ENCODE measurements at regions of chr10 and their contacts with region 1.

Region 1: GRCh38 chr10:35642027-35642792 is at the start of gene FZD8:
- DNase-seq: peak; percentile 93 to 95
- ATAC-seq: peak; percentile 93 to 94 (median 93)
- H3K4me3 ChIP-seq: peak within 1 kb of the TSS; percentile 95
- H3K27ac ChIP-seq: peak within 1 kb of the TSS; percentile 92
- H3K4me1 ChIP-seq: peaks cover 5% of the 10 kb centered on the region
- H3K27me3 ChIP-seq: no peaks in the 10 kb centered on the region
- CTCF ChIP-seq: peak; percentile 12
- total RNA-seq, gene FZD8: 4.1 to 6.1 (median 5.6) TPM

Region 2: DNA sequence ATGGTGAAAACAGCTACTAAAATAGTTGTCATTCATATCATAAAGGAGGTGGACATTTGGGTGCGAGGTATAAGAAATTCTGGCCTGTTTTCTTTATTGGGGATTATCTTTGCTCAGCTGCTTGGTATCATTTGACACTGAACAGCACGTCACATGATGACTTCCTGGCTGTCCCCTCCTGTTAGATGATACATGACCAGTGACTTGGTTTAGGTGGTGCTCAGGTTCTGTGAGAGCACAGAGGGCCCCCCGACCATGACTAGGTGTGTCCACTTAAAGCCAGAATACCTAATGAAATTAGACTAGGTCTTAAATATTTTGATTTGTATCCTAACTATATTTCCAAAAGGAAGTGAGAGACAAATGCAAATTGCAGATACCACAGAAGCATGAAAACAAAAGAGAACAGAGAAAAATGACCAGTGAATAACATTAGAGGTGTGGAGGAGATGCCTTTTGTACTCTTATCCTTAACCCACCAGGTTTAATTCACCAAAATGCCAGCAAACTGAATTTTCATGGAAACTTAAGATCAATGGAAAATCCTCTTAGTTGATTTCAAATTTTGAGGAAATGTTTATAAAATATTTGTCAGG is 87.7 kb before region 1 on chr10:
- intact Hi-C with region 1: no loop called
- DNase-seq: no peak
- ATAC-seq: peak; percentile 65 to 85 (median 81)
- H3K4me3 ChIP-seq: no peak overlapping the region
- H3K27ac ChIP-seq: peak overlapping the region; percentile 71
- H3K4me1 ChIP-seq: peaks cover 33% of the 10 kb centered on the region
- H3K27me3 ChIP-seq: no peaks in the 10 kb centered on the region
- CTCF ChIP-seq: no peak

Region 3: GRCh38 chr10:35758076-35758475 is 115.9 kb after region 1 on chr10:
- intact Hi-C with region 1: no loop called
- DNase-seq: peak; percentile 56 to 80
- ATAC-seq: peak; percentile 46 to 74 (median 57)
- H3K4me3 ChIP-seq: no peak overlapping the region
- H3K27ac ChIP-seq: no peak overlapping the region
- H3K4me1 ChIP-seq: no peaks in the 10 kb centered on the region
- H3K27me3 ChIP-seq: no peaks in the 10 kb centered on the region
- CTCF ChIP-seq: no peak

Region 4: DNA sequence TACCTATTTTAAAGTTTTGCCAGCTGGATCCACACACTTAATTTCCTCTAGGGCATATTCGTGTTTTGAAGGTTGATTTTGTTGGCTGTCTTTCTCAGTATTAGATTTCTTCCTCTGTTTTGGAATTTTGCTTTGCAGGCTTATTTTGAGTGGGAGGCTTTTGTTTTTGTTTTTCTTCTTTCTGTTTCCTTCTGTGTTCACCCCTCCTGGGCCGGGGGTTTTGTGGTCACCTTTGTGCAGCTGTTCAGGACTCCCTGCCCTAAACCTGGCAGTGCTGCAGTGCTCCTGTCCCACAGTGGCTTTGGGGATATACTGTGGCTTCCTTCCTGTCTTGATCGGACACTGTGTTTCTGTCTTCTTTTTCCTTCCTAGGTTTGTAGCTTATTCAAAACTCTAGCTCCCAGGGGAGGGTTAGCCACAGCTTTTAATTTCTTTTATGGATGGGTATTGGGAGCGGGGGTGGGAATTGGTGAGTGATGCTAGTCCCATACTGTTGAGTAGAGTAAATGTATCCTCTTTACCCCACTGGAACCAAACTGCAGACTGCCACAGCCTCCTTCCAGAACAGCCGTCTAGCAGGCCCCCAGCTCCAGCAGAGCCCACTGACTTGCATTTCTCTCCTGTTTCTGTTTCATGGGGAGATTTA is 228.6 kb after region 1 on chr10:
- intact Hi-C with region 1: no loop called
- DNase-seq: no peak
- ATAC-seq: no peak
- H3K4me3 ChIP-seq: no peak overlapping the region
- H3K27ac ChIP-seq: no peak overlapping the region
- H3K4me1 ChIP-seq: no peaks in the 10 kb centered on the region
- H3K27me3 ChIP-seq: no peaks in the 10 kb centered on the region
- CTCF ChIP-seq: no peak

Region 5: GRCh38 chr10:35889971-35890677 is 247.9 kb after region 1 on chr10:
- intact Hi-C with region 1: no loop called
- DNase-seq: no peak
- ATAC-seq: no peak
- H3K4me3 ChIP-seq: no peak overlapping the region
- H3K27ac ChIP-seq: no peak overlapping the region
- H3K4me1 ChIP-seq: no peaks in the 10 kb centered on the region
- H3K27me3 ChIP-seq: no peaks in the 10 kb centered on the region
- CTCF ChIP-seq: no peak

Region 6: DNA sequence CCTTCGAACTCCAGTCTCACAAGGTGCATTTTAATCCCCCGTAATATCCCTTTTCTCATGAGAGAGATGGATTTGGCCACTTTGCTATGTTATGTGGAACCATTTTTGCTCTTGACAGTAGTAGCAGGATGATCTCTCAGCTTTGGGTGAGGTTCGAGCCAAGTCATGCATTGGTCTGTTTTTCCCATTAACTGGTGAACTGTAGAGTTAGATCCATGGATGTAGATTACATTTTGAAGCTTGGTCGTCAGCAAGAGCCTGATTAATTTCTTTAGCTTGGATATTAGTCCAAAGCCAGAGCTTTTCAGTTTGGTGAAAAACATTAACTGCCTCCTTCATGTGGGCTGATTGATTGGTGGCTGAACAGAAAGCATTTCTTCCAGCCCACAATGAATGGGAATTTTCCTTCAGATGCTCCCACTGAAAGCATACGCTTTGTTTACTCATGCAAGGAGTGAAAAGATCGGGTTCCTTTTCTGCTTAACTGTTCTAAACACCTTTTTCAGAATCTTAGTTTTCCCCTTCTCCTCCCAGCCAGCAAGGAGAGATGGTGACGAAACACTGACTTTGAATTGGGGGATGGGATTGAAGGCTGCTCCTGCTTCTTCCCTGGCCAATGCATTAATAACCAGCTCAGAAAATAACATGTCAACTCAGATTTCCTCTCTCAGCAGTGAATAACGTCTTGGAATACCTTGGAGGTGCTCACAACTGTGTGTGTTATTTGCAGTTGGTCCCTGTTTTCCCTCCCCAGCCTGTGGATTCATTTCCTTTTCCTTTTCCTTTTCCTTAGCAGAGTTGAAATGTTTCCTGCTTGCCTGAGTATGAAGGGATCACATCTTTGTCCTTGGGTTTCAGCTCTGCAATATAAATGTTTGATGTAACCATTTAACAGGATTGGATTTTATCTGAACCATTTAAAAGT is 351.6 kb after region 1 on chr10:
- intact Hi-C with region 1: loop called in 1 of 2 experiments (anchors 10 kb)
- DNase-seq: no peak
- ATAC-seq: no peak
- H3K4me3 ChIP-seq: no peak overlapping the region
- H3K27ac ChIP-seq: no peak overlapping the region
- H3K4me1 ChIP-seq: no peaks in the 10 kb centered on the region
- H3K27me3 ChIP-seq: no peaks in the 10 kb centered on the region
- CTCF ChIP-seq: no peak

Region 7: GRCh38 chr10:36171953-36172940 is 530.0 kb after region 1 on chr10:
- intact Hi-C with region 1: loop called in 1 of 2 experiments (anchors 10 kb)
- DNase-seq: no peak
- ATAC-seq: no peak
- H3K4me3 ChIP-seq: no peak overlapping the region
- H3K27ac ChIP-seq: no peak overlapping the region
- H3K4me1 ChIP-seq: no peaks in the 10 kb centered on the region
- H3K27me3 ChIP-seq: no peaks in the 10 kb centered on the region
- CTCF ChIP-seq: no peak